Heart left ventricle (tissue), 16 donors: ENCODE measurements at regions of chr9 and their contacts with region 1.

Region 1: GRCh38 chr9:13279284-13280141 is at the start of gene MPDZ:
- DNase-seq: peak; percentile 75 to 83 (median 82)
- ATAC-seq: peak; percentile 66 to 93 (median 80)
- H3K4me3 ChIP-seq: peak within 1 kb of the TSS; percentile 53 to 83 (median 75)
- H3K27ac ChIP-seq: peak within 1 kb of the TSS; percentile 90 to 98 (median 96)
- H3K4me1 ChIP-seq: peaks cover under 1 to 36% (median 18%) of the 10 kb centered on the region in 12 donors
- H3K27me3 ChIP-seq: peaks cover 0 to 4% (median 0%) of the 10 kb centered on the region in 9 donors
- CTCF ChIP-seq: peak in 2 of 12 donors; percentile 3 to 12
- POLR2A ChIP-seq: peak; percentile 49 to 50
- total RNA-seq, gene MPDZ: 60.7 to 106 (median 69.1) TPM

Region 2: DNA sequence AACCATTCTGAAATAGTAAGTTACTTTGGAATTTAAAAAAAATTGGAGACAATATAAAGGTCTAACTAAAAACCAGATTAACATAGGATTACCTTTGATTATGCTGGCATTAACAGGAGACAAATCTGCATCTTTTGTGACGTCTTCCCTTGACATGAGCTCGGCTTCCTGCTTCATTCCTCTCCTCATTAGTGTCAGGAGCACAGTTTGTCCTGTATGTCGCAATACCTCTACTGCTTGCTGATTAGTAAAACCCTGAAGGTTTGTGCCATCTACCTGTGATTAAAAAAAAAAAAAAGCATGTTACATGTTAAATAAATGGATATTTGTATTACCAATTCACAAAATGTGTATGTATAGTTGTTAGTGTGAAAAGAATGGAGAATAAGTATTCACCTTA is 73.7 kb before region 1 on chr9:
- intact Hi-C with region 1: loop called in 4 of 10 experiments (anchors 2 to 10 kb)
- DNase-seq: no peak
- ATAC-seq: no peak
- H3K4me3 ChIP-seq: no peak overlapping the region
- H3K27ac ChIP-seq: no peak overlapping the region
- H3K4me1 ChIP-seq: peaks cover 0 to 26% (median 9%) of the 10 kb centered on the region in 12 donors
- H3K27me3 ChIP-seq: no peaks in the 10 kb centered on the region
- CTCF ChIP-seq: no peak
- POLR2A ChIP-seq: no peak

Region 3: GRCh38 chr9:13213337-13213736 is 66.2 kb before region 1 on chr9:
- intact Hi-C with region 1: loop called in 3 of 10 experiments (anchors 5 to 10 kb)
- DNase-seq: no peak
- ATAC-seq: no peak
- H3K4me3 ChIP-seq: no peak overlapping the region
- H3K27ac ChIP-seq: no peak overlapping the region
- H3K4me1 ChIP-seq: peaks cover 0 to 23% (median 8%) of the 10 kb centered on the region in 12 donors
- H3K27me3 ChIP-seq: no peaks in the 10 kb centered on the region
- CTCF ChIP-seq: peak in 10 of 12 donors; percentile 15 to 54 (median 38)
- POLR2A ChIP-seq: no peak

Region 4: GRCh38 chr9:13296972-13297371 is 17.5 kb after region 1 on chr9:
- intact Hi-C with region 1: loop called in 1 of 10 experiments (anchors 2 kb)
- DNase-seq: no peak
- ATAC-seq: no peak
- H3K4me3 ChIP-seq: no peak overlapping the region
- H3K27ac ChIP-seq: no peak overlapping the region
- H3K4me1 ChIP-seq: peaks cover 0 to 8% (median 0%) of the 10 kb centered on the region in 12 donors
- H3K27me3 ChIP-seq: no peaks in the 10 kb centered on the region
- CTCF ChIP-seq: no peak
- POLR2A ChIP-seq: no peak